Heart left ventricle (tissue), 16 donors: ENCODE measurements at regions of chr11 and their contacts with region 1.

Region 1: GRCh38 chr11:809287-810039 is at the start of gene RPLP2:
- DNase-seq: peak; percentile 98 to 99 (median 99)
- ATAC-seq: peak; percentile 89 to 95 (median 93)
- H3K4me3 ChIP-seq: peak within 1 kb of the TSS; percentile 73 to 100 (median 96)
- H3K27ac ChIP-seq: peak within 1 kb of the TSS; percentile 76 to 100 (median 96)
- H3K4me1 ChIP-seq: peaks cover 5 to 50% (median 35%) of the 10 kb centered on the region in 12 donors
- H3K27me3 ChIP-seq: no peaks in the 10 kb centered on the region
- CTCF ChIP-seq: no peak
- POLR2A ChIP-seq: peak; percentile 60 to 81
- total RNA-seq, gene RPLP2: 236 to 1,207 (median 933) TPM

Region 2: GRCh38 chr11:842370-843002 is 33.0 kb after region 1 on chr11 and contains the starts of genes POLR2L and TSPAN4:
- intact Hi-C with region 1: loop called in 2 of 10 experiments (anchors 1 to 5 kb)
- DNase-seq: peak; percentile 92 to 94 (median 93)
- ATAC-seq: peak in 2 of 4 donors; percentile 63 to 64
- H3K4me3 ChIP-seq: peak within 1 kb of the TSS; percentile 78 to 100 (median 93)
- H3K27ac ChIP-seq: peak within 1 kb of the TSS; percentile 86 to 99 (median 96)
- H3K4me1 ChIP-seq: peaks cover 7 to 78% (median 50%) of the 10 kb centered on the region in 12 donors
- H3K27me3 ChIP-seq: no peaks in the 10 kb centered on the region
- CTCF ChIP-seq: no peak
- POLR2A ChIP-seq: peak in 1 of 2 donors; percentile 93
- total RNA-seq, gene POLR2L: 74.4 to 267 (median 207) TPM
- total RNA-seq, gene TSPAN4: 22.7 to 93.0 (median 31.3) TPM